ENCODE measurements at regions of chr5 and their contacts with region 1.

Region 1: GRCh38 chr5:177454397-177455035 is 7.9 kb downstream of the PRR7 start:
- DNase-seq: peak; percentile 98
- ATAC-seq: peak; percentile 51
- H3K4me3 Mint-ChIP-seq: peak overlapping the region; percentile 85
- H3K27ac Mint-ChIP-seq: peak overlapping the region; percentile 64
- H3K4me1 Mint-ChIP-seq: peaks cover 11% of the 10 kb centered on the region
- H3K27me3 Mint-ChIP-seq: peaks cover 6% of the 10 kb centered on the region

Region 2: GRCh38 chr5:177390363-177391300 is 63.9 kb before region 1 on chr5:
- POLR2A ChIA-PET with region 1: interaction called, 31 read pairs
- DNase-seq: peak; percentile 83
- ATAC-seq: peak; percentile 88
- H3K4me3 Mint-ChIP-seq: peak overlapping the region; percentile 56
- H3K27ac Mint-ChIP-seq: peak overlapping the region; percentile 88
- H3K4me1 Mint-ChIP-seq: peaks cover 36% of the 10 kb centered on the region
- H3K27me3 Mint-ChIP-seq: peaks cover 3% of the 10 kb centered on the region

Region 3: GRCh38 chr5:177431317-177432142 is 23.0 kb before region 1 on chr5:
- POLR2A ChIA-PET with region 1: interaction called, 312 read pairs
- DNase-seq: peak; percentile 81
- ATAC-seq: peak; percentile 51
- H3K4me3 Mint-ChIP-seq: peak overlapping the region; percentile 94
- H3K27ac Mint-ChIP-seq: peak overlapping the region; percentile 83
- H3K4me1 Mint-ChIP-seq: peaks cover 47% of the 10 kb centered on the region
- H3K27me3 Mint-ChIP-seq: no peaks in the 10 kb centered on the region

Region 4: DNA sequence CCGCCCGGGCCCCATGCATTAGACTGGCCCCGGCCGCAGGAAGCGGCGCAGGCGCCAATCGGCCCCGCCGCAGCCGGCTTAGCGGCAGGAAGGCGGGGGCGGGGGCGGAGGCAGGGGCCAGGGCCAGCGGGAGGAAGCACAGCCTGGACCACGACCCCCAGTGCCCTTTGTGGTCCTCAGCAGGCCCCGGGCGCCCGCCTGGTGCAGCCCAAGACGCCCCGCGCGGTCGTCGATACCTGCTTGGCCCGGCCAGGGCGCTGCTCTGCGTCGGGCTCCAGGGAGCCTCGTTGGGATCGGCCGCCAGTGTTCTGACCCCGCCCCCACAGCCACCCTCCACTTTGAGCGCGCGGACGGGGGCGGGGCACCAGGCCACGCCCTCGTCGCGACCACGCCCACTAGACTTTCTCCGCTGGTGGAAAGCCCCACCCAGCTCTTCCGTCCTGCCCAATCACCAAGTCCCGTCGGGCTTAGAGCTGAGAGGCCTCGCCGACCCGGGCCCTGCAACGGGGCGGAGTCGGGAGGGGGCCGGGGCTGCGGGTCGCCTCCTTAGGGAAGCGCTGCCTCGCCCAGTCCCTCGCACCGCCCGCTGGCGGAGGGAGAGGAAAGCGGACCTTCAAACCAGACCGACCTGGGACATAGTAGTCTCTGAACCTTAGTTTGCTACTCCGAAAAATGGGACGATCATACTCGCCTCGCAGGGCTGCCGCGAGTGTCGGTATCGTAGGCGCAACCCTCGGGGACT is 42.9 kb after region 1 on chr5 and contains the start of gene PDLIM7:
- POLR2A ChIA-PET with region 1: interaction called, 19 read pairs
- DNase-seq: peak; percentile 98
- ATAC-seq: peak; percentile 83
- H3K4me3 Mint-ChIP-seq: peak within 1 kb of the TSS; percentile 87
- H3K27ac Mint-ChIP-seq: peak within 1 kb of the TSS; percentile 77
- H3K4me1 Mint-ChIP-seq: peaks cover 38% of the 10 kb centered on the region
- H3K27me3 Mint-ChIP-seq: peaks cover 17% of the 10 kb centered on the region
- total RNA-seq, gene PDLIM7: 51.6 to 60.6 TPM

Region 5: DNA sequence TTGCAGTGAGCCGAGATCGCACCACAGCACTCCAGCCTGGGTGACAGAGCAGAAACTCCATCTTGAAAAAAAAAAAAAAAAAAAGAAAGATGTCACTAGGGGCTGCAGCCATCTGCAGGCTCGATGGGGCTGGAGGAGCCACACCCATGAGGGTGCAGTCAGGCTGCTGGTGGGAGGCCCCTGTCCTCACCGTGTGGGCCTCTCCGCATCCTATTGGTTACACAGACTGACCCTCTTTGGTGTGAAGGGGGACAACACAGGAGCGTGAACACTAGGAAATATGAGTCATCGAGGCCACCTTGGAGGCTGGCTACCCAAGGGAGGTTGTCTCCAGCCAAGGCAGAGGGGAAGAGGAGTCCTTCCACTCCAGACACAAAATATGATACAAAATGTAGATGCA is 113.8 kb after region 1 on chr5:
- POLR2A ChIA-PET with region 1: no interaction called
- DNase-seq: no peak
- ATAC-seq: no peak
- H3K4me3 Mint-ChIP-seq: no peak overlapping the region
- H3K27ac Mint-ChIP-seq: no peak overlapping the region
- H3K4me1 Mint-ChIP-seq: no peaks in the 10 kb centered on the region
- H3K27me3 Mint-ChIP-seq: peaks cover 15% of the 10 kb centered on the region